B cell (primary cell): ENCODE measurements at regions of chr14 and their contacts with region 1.

Region 1: DNA sequence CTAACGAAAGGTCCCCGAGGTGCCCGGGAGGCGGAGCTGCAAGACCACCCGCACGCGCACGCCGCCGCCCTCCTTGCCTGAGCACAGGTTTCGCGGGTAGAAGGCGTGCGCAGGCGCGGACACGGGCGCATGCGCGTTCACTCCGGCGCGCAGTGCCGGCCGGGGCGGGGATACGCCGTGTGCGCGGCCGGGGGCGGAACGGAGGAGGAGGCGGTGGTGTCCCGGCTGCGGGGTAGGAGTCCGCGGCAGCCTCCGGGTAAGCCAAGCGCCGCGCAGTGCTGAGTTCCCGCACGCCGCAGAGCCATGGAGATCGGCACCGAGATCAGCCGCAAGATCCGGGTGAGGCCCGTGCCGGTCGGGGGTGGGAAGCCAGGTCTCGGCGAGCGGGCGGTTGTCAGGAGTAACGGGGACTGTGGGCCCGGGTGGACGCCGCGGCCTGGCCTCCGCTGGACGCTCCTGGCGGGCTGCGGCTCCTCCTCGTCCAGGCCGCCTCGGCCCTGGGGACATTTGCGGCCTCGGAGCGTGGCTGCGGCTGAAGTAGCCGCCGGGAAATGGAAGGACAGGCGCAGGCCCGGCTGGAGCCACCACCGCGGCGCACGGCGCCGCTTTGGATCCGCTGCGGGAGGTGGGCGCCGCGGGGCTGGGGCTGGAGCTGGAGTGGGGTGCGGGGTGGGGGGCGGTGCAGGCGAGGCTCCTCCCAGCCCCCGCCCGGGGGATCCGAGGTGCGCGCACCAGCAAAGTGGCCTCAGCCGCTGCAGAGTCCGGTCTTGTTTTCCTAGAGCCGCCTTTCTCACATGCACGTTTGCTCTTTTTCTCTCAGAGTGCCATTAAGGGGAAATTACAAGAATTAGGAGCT is at the start of gene ZC3H14:
- DNase-seq: peak; percentile 93
- ATAC-seq: peak; percentile 95
- H3K4me3 ChIP-seq: peak within 1 kb of the TSS; percentile 63 to 93 (median 86)
- H3K4me3 Mint-ChIP-seq: peak within 1 kb of the TSS; percentile 94
- H3K27ac ChIP-seq: peak within 1 kb of the TSS; percentile 48 to 75
- H3K27ac Mint-ChIP-seq: peak within 1 kb of the TSS; percentile 90
- H3K4me1 ChIP-seq: peaks cover 12 to 14% of the 10 kb centered on the region in 2 donors
- H3K4me1 Mint-ChIP-seq: peaks cover 20% of the 10 kb centered on the region
- H3K27me3 ChIP-seq: peaks cover 0 to 13% (median 3%) of the 10 kb centered on the region in 4 experiments
- H3K27me3 Mint-ChIP-seq: peaks cover 13% of the 10 kb centered on the region
- CTCF ChIP-seq: no peak
- total RNA-seq, gene ZC3H14: 47.0 and 48.0 TPM in 2 replicates

Region 2: DNA sequence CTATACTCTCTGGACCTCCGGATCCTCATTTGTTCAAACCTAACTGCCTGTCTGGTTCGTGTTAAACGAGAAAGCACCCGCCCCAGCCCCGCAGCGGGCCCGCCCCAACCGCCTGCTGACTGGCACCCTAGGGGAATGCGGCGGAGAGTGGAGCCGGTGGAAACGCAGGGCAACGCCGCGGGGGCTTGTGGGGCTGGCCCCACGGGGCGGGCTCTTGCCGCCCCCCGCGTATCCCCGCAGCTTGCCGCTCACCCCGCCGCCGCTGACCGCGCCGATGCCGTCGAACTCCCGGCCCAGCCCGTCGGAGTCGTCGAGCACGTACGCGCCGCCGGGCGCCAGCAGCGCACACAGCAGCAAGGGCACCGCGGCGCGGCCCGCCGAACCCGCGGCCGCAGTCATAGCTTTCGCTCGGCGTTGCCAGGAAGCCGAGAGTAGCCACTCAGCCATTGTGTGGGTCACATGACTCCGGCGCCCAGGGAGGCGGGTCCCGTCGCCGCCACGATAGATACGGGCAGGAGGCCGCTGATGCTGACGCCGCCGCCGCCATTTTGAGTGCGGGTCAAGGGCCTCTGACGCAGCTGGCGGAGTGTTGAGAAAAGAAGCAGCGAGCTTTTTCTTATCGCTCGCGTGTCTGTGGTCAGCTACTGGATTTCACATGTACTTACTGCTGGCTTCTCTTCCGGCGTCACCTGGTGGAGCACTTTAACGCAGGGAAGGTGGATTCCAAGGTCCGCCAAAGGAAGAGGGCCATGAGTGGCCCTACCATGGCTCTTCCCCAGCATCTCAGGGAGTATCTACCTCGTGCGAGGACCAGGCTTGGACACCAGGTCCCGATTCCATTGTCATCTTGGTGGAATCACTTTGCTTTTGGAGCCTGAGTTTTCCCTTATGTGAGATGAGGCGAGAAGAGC is 570.1 kb before region 1 on chr14 and contains the start of gene GALC:
- CTCF ChIA-PET with region 1: no interaction called
- POLR2A ChIA-PET with region 1: no interaction called
- intact Hi-C with region 1: loop called (anchors 5 kb)
- DNase-seq: peak; percentile 97
- ATAC-seq: peak; percentile 82
- H3K4me3 ChIP-seq: peak within 1 kb of the TSS; percentile 47 to 74 (median 66)
- H3K4me3 Mint-ChIP-seq: peak within 1 kb of the TSS; percentile 87
- H3K27ac ChIP-seq: peak within 1 kb of the TSS; percentile 95 to 97
- H3K27ac Mint-ChIP-seq: peak within 1 kb of the TSS; percentile 99
- H3K4me1 ChIP-seq: peaks cover 15 to 29% of the 10 kb centered on the region in 2 donors
- H3K4me1 Mint-ChIP-seq: peaks cover 38% of the 10 kb centered on the region
- H3K27me3 ChIP-seq: no peaks in the 10 kb centered on the region
- H3K27me3 Mint-ChIP-seq: no peaks in the 10 kb centered on the region
- CTCF ChIP-seq: no peak
- total RNA-seq, gene GALC: 15.6 and 17.8 TPM in 2 replicates

Region 3: DNA sequence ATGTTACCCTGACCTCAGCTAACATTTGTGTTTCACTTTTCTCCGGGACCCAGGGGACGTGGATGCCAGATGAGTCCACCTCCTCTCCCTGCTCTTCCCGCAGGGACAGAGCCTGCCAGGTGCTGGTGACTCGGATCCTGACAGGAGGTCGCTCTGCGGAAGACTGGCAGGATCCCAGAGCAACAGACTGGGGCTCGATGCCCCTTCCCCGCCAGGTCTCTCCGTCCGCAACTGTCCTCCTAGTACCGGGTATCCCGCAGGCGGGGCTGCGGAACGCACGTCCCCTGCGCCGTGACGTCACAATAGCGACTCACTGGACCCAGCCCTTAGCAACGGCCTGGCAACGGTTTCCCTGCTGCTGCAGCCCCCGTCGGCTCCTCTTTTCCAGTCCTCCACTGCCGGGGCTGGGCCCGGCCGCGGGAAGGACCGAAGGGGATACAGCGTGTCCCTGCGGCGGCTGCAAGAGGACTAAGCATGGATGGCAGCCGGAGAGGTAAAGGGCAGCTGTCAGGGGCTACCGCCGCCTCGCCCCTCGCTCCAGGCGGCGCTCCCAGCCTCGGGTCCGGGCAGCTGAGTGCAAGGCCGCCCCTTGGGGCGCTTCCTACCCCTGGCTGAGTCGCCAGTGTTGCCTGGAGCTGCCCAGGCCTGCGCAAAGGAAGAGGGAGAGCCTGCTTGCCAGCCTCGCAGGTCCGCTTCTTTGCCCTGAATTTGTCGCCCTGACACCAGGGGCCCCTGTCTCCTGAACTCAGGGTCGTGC is 177.5 kb before region 1 on chr14 and contains the start of gene SPATA7:
- CTCF ChIA-PET with region 1: no interaction called
- POLR2A ChIA-PET with region 1: no interaction called
- intact Hi-C with region 1: loop called (anchors 10 kb)
- DNase-seq: peak; percentile 82
- ATAC-seq: peak; percentile 92
- H3K4me3 ChIP-seq: peak within 1 kb of the TSS; percentile 81 to 95 (median 93)
- H3K4me3 Mint-ChIP-seq: peak within 1 kb of the TSS; percentile 98
- H3K27ac ChIP-seq: peak within 1 kb of the TSS; percentile 38 to 67
- H3K27ac Mint-ChIP-seq: peak within 1 kb of the TSS; percentile 78
- H3K4me1 ChIP-seq: peaks cover 6 to 13% of the 10 kb centered on the region in 2 donors
- H3K4me1 Mint-ChIP-seq: peaks cover 20% of the 10 kb centered on the region
- H3K27me3 ChIP-seq: peaks cover 0 to 4% (median 0%) of the 10 kb centered on the region in 4 experiments
- H3K27me3 Mint-ChIP-seq: peaks cover 3% of the 10 kb centered on the region
- CTCF ChIP-seq: no peak
- total RNA-seq, gene SPATA7: 3.2 and 3.3 TPM in 2 replicates

Region 4: GRCh38 chr14:88492272-88493089 is 70.6 kb before region 1 on chr14:
- CTCF ChIA-PET with region 1: no interaction called
- POLR2A ChIA-PET with region 1: no interaction called
- intact Hi-C with region 1: no loop called
- DNase-seq: peak; percentile 74
- ATAC-seq: peak; percentile 79
- H3K4me3 ChIP-seq: no peak overlapping the region
- H3K4me3 Mint-ChIP-seq: no peak overlapping the region
- H3K27ac ChIP-seq: no peak overlapping the region
- H3K27ac Mint-ChIP-seq: no peak overlapping the region
- H3K4me1 ChIP-seq: no peaks in the 10 kb centered on the region
- H3K4me1 Mint-ChIP-seq: peaks cover 4% of the 10 kb centered on the region
- H3K27me3 ChIP-seq: no peaks in the 10 kb centered on the region
- H3K27me3 Mint-ChIP-seq: no peaks in the 10 kb centered on the region
- CTCF ChIP-seq: peak; percentile 85

Region 5: DNA sequence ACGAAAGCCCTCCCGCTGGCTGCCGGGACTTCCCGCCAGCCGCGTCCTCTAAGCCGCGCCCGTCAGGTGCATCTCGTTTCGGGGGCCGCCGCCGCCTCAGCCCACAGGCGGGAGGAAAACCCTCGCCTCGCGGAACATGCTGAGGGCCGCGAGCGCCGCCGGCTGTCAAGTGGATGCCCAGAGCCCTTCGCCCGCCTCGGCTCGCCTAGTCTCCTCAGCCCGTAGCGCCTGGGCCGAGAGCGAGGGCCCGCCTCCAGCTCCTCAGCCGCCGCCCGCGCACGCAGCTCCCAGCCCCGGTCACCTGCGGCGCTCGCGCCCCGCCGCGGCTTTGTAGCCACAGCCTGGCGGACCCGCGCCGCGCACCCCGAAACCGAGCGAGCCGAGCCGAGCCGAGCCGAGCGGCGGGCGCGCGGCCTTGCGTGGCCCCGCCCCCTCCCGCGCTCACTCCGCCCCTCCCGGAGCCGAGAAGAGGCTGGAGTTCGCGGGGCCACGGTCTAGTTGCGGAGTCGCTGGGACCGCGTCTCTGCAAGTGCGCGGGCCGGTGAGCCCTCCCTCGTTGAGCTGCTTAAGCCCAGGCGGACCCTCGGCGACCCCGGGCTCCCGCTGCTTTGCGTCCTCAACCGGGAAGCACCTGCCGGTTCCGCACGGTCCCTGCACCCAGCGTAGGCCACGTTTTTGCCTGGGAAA is 229.7 kb after region 1 on chr14 and contains the start of gene EML5:
- CTCF ChIA-PET with region 1: no interaction called
- POLR2A ChIA-PET with region 1: no interaction called
- intact Hi-C with region 1: loop called (anchors 1 kb)
- DNase-seq: peak; percentile 93
- ATAC-seq: peak; percentile 84
- H3K4me3 ChIP-seq: peak within 1 kb of the TSS; percentile 68 to 77 (median 74)
- H3K4me3 Mint-ChIP-seq: peak within 1 kb of the TSS; percentile 92
- H3K27ac ChIP-seq: peak within 1 kb of the TSS; percentile 68 to 83
- H3K27ac Mint-ChIP-seq: peak within 1 kb of the TSS; percentile 89
- H3K4me1 ChIP-seq: peaks cover 8 to 14% of the 10 kb centered on the region in 2 donors
- H3K4me1 Mint-ChIP-seq: peaks cover 19% of the 10 kb centered on the region
- H3K27me3 ChIP-seq: peaks cover 0 to 4% (median 2%) of the 10 kb centered on the region in 4 experiments
- H3K27me3 Mint-ChIP-seq: no peaks in the 10 kb centered on the region
- CTCF ChIP-seq: peak; percentile 17
- total RNA-seq, gene EML5: 6.5 and 6.9 TPM in 2 replicates

Region 6: GRCh38 chr14:88824314-88825077 is 261.4 kb after region 1 on chr14 and contains the start of gene TTC8:
- CTCF ChIA-PET with region 1: no interaction called
- POLR2A ChIA-PET with region 1: no interaction called
- intact Hi-C with region 1: loop called (anchors 1 kb)
- DNase-seq: peak; percentile 95
- ATAC-seq: peak; percentile 98
- H3K4me3 ChIP-seq: peak within 1 kb of the TSS; percentile 65 to 88 (median 81)
- H3K4me3 Mint-ChIP-seq: peak within 1 kb of the TSS; percentile 93
- H3K27ac ChIP-seq: peak within 1 kb of the TSS; percentile 82 to 98
- H3K27ac Mint-ChIP-seq: peak within 1 kb of the TSS; percentile 99
- H3K4me1 ChIP-seq: peaks cover 11 to 12% of the 10 kb centered on the region in 2 donors
- H3K4me1 Mint-ChIP-seq: peaks cover 15% of the 10 kb centered on the region
- H3K27me3 ChIP-seq: no peaks in the 10 kb centered on the region
- H3K27me3 Mint-ChIP-seq: peaks cover 19% of the 10 kb centered on the region
- CTCF ChIP-seq: no peak
- total RNA-seq, gene TTC8: 7.2 and 9.1 TPM in 2 replicates